ENCODE measurements at regions of chr11 and their contacts with region 1.

Region 1: GRCh38 chr11:18383388-18384156 is 10.8 kb upstream of the LDHA start:
- DNase-seq: peak; percentile 100
- H3K4me3 ChIP-seq: peak overlapping the region in 2 of 3 experiments; percentile 7 to 11
- H3K27ac ChIP-seq: peak overlapping the region; percentile 96
- H3K4me1 ChIP-seq: peaks cover 24% of the 10 kb centered on the region
- H3K27me3 ChIP-seq: no peaks in the 10 kb centered on the region
- CTCF ChIP-seq: no peak

Region 2: DNA sequence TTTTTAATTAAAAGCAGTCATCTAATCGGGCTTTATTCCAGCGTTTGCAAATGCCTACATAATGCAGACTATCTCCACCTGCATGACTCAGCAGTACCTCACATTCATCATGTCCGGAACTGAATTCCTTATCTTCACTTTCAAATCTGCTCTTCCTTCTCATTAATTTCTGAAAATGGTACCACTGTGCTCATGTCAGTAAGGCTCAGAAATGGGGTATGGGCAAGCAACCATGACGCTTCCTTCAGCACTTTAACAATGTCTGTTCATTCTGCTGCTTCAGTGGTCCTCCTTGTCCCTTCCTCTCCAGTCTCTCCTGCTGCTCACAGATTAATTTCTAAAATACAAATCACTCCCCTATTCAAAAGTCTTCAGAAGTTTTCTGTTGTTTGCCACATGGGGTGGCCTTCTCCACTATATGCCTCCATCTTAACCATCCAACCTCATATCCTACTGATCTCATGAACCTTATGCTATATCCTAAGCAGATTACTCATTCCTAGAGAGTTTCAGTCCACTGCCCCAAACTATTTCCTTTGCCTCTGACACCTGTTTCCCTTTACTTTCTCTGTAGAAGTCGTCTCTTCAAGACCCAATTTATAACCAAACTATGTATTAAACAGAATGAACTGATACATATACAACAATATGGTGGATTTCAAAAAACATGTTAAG is 54.2 kb before region 1 on chr11:
- CTCF ChIA-PET with region 1: no interaction called
- dilution Hi-C with region 1: no loop called
- in situ Hi-C with region 1: no loop called
- intact Hi-C with region 1: loop called (anchors 1 kb)
- DNase-seq: peak; percentile 77
- H3K4me3 ChIP-seq: no peak overlapping the region
- H3K27ac ChIP-seq: peak overlapping the region; percentile 80
- H3K4me1 ChIP-seq: peaks cover 25% of the 10 kb centered on the region
- H3K27me3 ChIP-seq: no peaks in the 10 kb centered on the region
- CTCF ChIP-seq: no peak

Region 3: GRCh38 chr11:18368221-18368620 is 15.4 kb before region 1 on chr11:
- CTCF ChIA-PET with region 1: no interaction called
- dilution Hi-C with region 1: no loop called
- in situ Hi-C with region 1: no loop called
- intact Hi-C with region 1: loop called (anchors 1 kb)
- DNase-seq: peak; percentile 58
- H3K4me3 ChIP-seq: no peak overlapping the region
- H3K27ac ChIP-seq: no peak overlapping the region
- H3K4me1 ChIP-seq: peaks cover 3% of the 10 kb centered on the region
- H3K27me3 ChIP-seq: no peaks in the 10 kb centered on the region
- CTCF ChIP-seq: no peak

Region 4: DNA sequence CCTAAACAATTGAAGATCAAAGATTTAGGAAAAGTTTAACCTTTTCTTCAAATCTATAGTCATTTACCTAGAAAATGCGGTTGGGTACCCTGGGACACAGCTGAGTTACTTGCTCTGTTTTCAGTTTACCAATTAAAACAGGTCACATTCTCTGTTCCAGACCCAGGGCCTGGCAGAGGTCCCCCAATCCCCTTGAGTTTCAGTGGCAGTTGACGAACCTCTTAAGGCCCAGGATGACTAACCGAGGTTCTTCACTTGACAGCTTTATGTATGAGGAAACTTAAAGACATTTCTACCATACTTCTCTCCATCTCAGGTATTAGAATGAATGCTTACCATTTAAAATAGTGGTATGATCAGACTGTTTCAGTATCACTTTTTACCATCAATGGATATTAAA is 88.4 kb after region 1 on chr11:
- CTCF ChIA-PET with region 1: no interaction called
- dilution Hi-C with region 1: no loop called
- in situ Hi-C with region 1: no loop called
- intact Hi-C with region 1: no loop called
- DNase-seq: no peak
- H3K4me3 ChIP-seq: no peak overlapping the region
- H3K27ac ChIP-seq: no peak overlapping the region
- H3K4me1 ChIP-seq: no peaks in the 10 kb centered on the region
- H3K27me3 ChIP-seq: no peaks in the 10 kb centered on the region
- CTCF ChIP-seq: no peak

Region 5: DNA sequence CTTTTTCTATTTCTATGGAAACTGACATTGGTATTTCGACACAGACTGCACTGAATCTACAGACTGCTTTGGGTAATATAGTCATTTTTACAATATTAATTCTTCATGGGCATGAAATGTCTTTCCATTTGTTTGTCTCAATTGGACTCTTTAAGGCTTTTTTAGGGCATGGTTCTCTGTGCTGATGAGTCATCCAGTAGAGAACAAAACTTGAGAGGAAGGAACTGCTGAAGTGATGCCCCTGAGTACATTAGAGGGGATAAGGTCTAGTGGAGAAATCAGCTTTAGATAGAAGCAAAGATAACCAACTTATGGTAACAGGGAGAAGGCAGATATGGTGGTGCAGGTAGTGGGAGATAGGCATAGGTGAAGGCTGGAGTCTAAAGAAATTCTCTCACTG is 118.1 kb after region 1 on chr11:
- CTCF ChIA-PET with region 1: no interaction called
- dilution Hi-C with region 1: no loop called
- in situ Hi-C with region 1: no loop called
- intact Hi-C with region 1: no loop called
- DNase-seq: no peak
- H3K4me3 ChIP-seq: no peak overlapping the region
- H3K27ac ChIP-seq: no peak overlapping the region
- H3K4me1 ChIP-seq: no peaks in the 10 kb centered on the region
- H3K27me3 ChIP-seq: no peaks in the 10 kb centered on the region
- CTCF ChIP-seq: no peak

Measured in mammary epithelial cell (primary cell).